ENCODE measurements at regions of chr4 and their contacts with region 1.

Region 1: DNA sequence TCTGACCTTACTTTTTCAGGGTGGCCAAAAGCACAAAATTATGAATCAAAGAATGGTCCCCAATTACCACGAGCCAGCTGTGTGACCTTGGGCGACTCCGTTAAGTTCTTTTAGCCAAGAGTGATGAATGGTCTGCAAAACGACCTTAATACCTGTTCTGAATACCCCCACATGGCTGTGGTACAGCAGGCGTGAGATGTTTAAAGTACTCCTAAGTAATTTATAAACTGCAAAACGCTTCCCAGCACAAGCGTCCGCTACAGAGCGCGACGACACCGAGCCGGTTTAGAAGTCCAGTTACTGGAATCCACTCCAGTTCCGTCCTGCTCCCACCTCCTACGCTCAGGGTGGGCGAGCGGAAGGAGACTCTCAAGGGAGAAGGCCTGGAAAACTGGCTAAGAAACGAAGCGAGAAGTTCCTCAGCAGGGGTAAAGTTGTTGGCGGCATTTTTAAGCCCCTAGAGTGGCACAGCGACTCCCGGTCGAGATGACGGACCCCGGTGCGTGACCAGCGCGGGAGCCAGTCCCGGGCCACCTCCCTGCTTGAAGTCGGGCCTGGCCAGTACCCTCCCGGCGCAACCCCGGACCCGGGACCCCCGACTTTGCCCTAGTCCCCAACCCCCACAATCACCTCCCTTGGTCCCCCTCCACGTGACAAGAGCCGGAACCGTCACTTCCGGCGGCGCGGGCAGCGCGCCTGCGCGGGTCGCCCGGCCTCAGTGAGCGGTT is 683 bp upstream of the BMP2K start:
- DNase-seq: peak; percentile 76 to 94 (median 84)
- H3K4me3 ChIP-seq: peak overlapping the region; percentile 68 to 99 (median 92)
- H3K27ac ChIP-seq: peak overlapping the region; percentile 67 to 99 (median 97)
- H3K27me3 ChIP-seq: no peaks in the 10 kb centered on the region
- CTCF ChIP-seq: peak in 6 of 56 donors; percentile 2 to 19 (median 8)

Region 2: DNA sequence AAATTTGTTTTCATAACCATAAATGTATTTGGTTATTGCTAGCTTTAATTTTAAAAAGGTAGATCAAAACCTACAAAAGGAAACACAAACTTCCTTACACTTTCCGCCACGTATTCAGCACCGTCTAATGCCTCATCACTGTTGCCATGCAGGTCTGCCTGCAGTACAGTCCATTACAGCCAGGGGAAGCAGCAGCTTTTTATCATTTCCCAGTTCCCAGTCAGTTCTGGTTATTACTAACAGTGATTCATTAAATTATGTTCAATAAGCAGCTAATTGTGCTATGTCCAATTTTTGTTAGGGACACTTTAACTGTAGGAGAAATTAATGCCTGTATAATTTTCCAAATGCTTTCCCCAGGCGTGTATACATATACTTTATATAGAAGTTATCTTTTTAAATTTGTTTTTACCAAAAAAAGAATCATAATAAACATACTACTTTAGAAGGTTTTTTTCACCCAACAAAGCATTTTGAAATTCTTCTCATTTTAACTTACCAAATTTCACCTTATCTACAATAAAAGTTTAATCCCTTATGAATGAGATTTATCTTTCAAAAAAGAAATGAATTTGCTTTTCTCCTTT is 130.6 kb before region 1 on chr4:
- intact Hi-C with region 1: loop called (anchors 5 kb)
- DNase-seq: peak in 4 of 10 donors; percentile 33 to 63 (median 52)
- H3K4me3 ChIP-seq: peak overlapping the region in 2 of 59 donors; percentile 3 to 35
- H3K27ac ChIP-seq: peak overlapping the region in 52 of 59 donors; percentile 0 to 92 (median 78)
- H3K27me3 ChIP-seq: no peaks in the 10 kb centered on the region
- CTCF ChIP-seq: peak; percentile 60 to 97 (median 88)

Region 3: DNA sequence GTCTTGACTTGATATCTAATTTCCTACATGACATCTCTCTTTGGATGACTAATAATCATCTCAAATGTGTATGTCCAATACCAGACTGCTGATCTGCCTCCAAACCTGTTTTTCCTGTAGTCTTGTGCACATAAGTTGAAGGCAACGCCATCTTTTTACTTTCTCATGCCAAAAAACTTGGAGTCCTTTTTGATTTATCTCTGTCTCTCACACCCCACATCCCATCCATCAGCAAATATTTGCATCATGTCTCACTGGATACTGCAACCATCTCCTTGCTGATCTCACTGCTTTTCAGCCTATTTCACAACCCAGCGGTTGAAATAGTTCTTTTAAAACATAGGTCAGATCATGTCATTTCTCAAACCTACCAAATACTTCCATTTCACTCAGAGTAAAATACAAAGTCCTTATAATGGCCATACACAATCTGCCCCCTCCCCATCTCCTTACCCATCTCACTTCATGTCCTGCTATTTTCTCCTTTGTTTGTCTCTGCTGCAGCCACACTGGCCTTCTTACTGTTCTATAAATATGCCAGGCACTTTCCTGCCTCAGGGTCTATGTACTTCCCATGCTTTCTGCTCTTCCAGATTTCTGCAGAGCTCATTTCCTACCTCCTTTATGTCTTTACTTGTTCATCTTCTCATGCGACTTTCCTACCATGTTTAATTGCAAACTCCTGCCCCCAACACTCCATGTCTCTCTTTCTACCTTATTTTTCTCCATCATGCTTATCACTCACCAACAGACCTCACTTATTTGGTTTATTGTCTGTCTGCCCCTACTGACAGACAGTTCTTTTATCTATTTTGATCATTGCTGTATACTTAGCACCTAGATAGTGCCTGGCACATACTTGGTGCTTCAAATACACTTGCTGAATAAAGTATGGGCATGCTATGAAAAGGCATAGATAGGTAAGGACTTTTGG is 125.1 kb before region 1 on chr4:
- intact Hi-C with region 1: loop called (anchors 5 kb)
- DNase-seq: no peak
- H3K4me3 ChIP-seq: no peak overlapping the region
- H3K27ac ChIP-seq: peak overlapping the region in 27 of 59 donors; percentile 12 to 88 (median 41)
- H3K27me3 ChIP-seq: peaks cover 0 to 2% (median 0%) of the 10 kb centered on the region in 45 donors
- CTCF ChIP-seq: no peak

Region 4: DNA sequence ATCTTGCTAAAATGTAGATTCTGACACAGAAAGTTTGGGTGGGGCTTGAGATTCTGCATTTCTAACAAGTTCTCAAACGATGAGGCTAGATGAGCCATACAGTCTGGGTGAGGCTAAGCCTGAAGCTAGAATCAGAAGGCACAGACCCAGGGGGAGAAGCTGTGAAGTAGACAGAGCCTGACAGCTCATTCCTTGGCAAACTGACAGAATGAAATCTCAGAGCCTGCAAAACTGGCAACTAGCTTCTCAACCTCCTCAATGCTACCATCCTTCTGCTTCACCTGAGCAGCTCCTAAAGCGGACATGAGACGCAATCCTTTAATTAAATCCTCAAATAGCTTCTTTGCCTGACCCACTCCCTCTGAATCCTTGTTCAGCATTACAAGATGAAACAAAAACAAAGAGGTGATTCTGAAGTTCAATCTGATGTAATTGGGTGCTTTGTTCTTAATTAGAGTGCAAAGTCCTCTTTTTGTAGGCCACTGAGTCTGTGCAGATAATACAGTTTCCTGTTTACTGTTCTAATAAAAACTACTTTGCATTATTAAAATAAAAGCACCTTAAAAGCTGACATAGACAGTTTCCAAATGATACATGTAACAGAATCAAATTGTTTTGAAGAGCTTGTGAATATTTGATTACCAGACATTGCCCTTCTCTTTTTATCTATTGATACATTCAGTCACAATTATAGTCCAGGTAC is 70.3 kb before region 1 on chr4:
- intact Hi-C with region 1: loop called in 1 of 2 experiments (anchors 10 kb)
- DNase-seq: no peak
- H3K4me3 ChIP-seq: no peak overlapping the region
- H3K27ac ChIP-seq: peak overlapping the region in 47 of 59 donors; percentile 1 to 90 (median 54)
- H3K27me3 ChIP-seq: no peaks in the 10 kb centered on the region
- CTCF ChIP-seq: no peak

Region 5: DNA sequence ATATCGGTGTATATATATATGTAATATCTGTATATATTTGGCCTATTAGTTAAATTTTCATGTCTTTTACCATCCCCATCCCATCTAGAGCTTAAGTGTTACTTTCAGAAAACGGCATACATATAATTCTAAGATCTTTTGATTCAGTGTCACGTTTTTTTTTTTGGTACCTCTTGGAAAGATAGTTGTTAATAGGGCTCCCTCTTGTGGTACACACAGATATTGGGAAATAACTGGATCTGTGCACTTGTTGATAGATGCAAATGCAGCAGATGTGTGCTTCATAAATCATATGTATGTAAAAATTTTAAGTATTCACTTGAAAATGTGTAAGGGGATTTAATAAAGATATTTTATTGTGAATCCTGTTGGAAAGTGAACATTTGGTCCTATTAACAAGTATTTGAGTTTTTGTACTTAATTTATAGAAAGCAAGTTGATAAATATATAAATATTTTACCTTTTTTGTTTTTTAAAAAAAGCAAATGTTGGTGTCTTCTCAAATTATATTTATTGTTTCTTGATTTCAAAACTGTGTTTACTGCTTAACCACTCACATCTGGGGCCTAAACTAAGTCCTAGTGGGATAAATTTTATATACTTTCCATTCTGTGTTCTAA is 89.0 kb after region 1 on chr4:
- intact Hi-C with region 1: loop called (anchors 5 kb)
- DNase-seq: no peak
- H3K4me3 ChIP-seq: no peak overlapping the region
- H3K27ac ChIP-seq: no peak overlapping the region
- H3K27me3 ChIP-seq: no peaks in the 10 kb centered on the region
- CTCF ChIP-seq: peak; percentile 68 to 96 (median 88)

Region 6: GRCh38 chr4:78938868-78939666 is 163.6 kb after region 1 on chr4 and contains the start of gene PAQR3:
- intact Hi-C with region 1: loop called (anchors 5 kb)
- DNase-seq: peak; percentile 56 to 90 (median 74)
- H3K4me3 ChIP-seq: peak within 1 kb of the TSS; percentile 67 to 98 (median 92)
- H3K27ac ChIP-seq: peak within 1 kb of the TSS in 52 of 59 donors; percentile 1 to 89 (median 72)
- H3K27me3 ChIP-seq: no peaks in the 10 kb centered on the region
- CTCF ChIP-seq: peak in 12 of 56 donors; percentile 7 to 27 (median 20)
- total RNA-seq, gene PAQR3: 22.7 to 60.0 (median 43.0) TPM